MCF 10A (cell line): ENCODE measurements at regions of chr3 and their contacts with region 1.

Region 1: DNA sequence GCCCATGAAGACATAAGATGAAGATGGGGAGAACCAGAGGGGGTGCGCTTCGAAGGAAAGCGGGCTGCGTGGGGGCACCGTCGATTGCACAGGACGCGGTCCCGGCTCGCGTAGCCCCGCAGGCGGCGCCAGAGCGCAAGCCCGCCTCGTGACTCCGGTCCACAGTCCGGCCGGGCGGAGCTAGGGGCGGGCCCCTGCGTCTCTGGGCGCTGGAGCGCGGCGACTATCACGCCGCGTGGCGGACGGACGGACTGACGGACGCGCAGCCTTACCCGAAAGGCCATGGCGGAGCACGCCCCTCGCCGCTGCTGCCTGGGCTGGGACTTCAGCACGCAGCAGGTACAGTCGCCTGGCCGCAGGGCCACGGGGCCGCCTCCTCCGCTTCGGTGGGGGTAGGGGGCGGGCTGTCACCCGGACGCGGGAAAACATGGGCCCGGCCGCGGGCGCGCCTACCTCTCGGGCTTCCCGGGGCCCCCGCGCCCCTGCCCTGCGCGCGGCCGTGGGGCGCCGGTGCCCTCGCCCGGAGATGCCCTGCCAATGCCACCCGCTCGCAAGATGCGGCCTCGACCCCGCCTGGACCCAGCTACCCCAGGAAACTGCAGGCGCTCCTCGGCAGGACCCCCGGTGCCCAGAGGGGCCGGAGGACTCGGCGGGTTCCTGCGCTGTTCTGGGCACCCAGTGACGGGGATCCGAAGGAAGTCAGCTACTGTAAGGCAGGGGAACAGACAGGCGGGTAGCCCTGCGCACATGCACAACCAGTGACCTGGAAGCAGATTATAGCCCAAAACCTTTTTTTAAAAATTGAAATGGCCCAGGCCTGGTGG is at the start of gene XYLB:
- DNase-seq: peak; percentile 83
- H3K4me3 Mint-ChIP-seq: peak within 1 kb of the TSS; percentile 69
- H3K27ac Mint-ChIP-seq: no peak within 1 kb of the TSS
- H3K4me1 Mint-ChIP-seq: peaks cover 8% of the 10 kb centered on the region
- H3K27me3 Mint-ChIP-seq: no peaks in the 10 kb centered on the region
- CTCF ChIP-seq: peak; percentile 77
- total RNA-seq, gene XYLB: 4.4 and 6.6 TPM in 2 replicates

Region 2: DNA sequence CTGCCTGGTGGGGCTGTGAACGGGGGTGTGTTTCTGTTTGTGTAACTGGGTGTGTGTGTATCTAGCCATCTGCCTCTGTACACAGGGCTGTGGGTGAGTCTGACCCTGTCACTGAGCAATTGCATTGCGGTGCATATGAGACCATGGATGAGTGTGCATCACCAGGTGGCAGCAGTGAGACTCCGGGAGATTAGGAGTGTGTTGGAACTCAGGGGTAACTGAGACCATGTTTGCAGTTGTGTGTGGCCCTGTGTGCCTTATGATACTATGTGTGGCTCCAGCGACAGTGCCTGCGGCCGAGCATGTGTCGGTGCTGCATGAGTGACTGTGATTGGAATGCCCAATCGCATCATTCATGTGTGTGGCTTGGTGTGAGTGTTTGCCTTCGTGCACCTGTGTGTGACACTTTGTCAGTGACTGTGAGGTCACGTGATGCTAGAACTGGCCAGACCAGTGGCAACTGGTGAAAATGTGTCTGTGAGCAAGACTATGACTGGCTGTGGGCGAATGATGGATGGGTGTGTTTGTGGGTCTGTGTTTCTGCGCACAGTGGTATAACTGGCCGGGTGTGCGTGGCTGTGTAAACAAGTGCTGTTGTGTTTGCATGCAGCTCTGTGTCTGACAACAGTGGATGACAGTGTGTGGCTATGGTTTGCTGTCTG is 342.3 kb before region 1 on chr3:
- CTCF ChIA-PET with region 1: interaction called, 8 read pairs
- POLR2A ChIA-PET with region 1: no interaction called
- intact Hi-C with region 1: loop called (anchors 10 kb)
- DNase-seq: peak; percentile 81
- H3K4me3 Mint-ChIP-seq: no peak overlapping the region
- H3K27ac Mint-ChIP-seq: no peak overlapping the region
- H3K4me1 Mint-ChIP-seq: peaks cover 23% of the 10 kb centered on the region
- H3K27me3 Mint-ChIP-seq: no peaks in the 10 kb centered on the region
- CTCF ChIP-seq: peak; percentile 69

Region 3: GRCh38 chr3:38136777-38137614 is 209.8 kb before region 1 on chr3 and contains the start of gene ACAA1:
- CTCF ChIA-PET with region 1: no interaction called
- POLR2A ChIA-PET with region 1: interaction called, 4 read pairs
- intact Hi-C with region 1: loop called (anchors 5 kb)
- DNase-seq: peak; percentile 99
- H3K4me3 Mint-ChIP-seq: peak within 1 kb of the TSS; percentile 81
- H3K27ac Mint-ChIP-seq: peak within 1 kb of the TSS; percentile 71
- H3K4me1 Mint-ChIP-seq: peaks cover 51% of the 10 kb centered on the region
- H3K27me3 Mint-ChIP-seq: no peaks in the 10 kb centered on the region
- CTCF ChIP-seq: no peak
- total RNA-seq, gene ACAA1: 36.6 and 46.7 TPM in 2 replicates

Region 4: GRCh38 chr3:38334142-38335055 is 12.4 kb before region 1 on chr3:
- CTCF ChIA-PET with region 1: interaction called, 15 read pairs
- POLR2A ChIA-PET with region 1: no interaction called
- intact Hi-C with region 1: no loop called
- DNase-seq: no peak
- H3K4me3 Mint-ChIP-seq: no peak overlapping the region
- H3K27ac Mint-ChIP-seq: no peak overlapping the region
- H3K4me1 Mint-ChIP-seq: no peaks in the 10 kb centered on the region
- H3K27me3 Mint-ChIP-seq: no peaks in the 10 kb centered on the region
- CTCF ChIP-seq: no peak

Region 5: GRCh38 chr3:38454884-38455638 is 108.3 kb after region 1 on chr3:
- CTCF ChIA-PET with region 1: interaction called, 27 read pairs
- POLR2A ChIA-PET with region 1: interaction called, 6 read pairs
- intact Hi-C with region 1: loop called (anchors 2 kb)
- DNase-seq: peak; percentile 78
- H3K4me3 Mint-ChIP-seq: peak overlapping the region; percentile 89
- H3K27ac Mint-ChIP-seq: peak overlapping the region; percentile 88
- H3K4me1 Mint-ChIP-seq: peaks cover 13% of the 10 kb centered on the region
- H3K27me3 Mint-ChIP-seq: no peaks in the 10 kb centered on the region
- CTCF ChIP-seq: no peak

Region 6: GRCh38 chr3:38496131-38496910 is 149.5 kb after region 1 on chr3 and contains the start of gene EXOG:
- CTCF ChIA-PET with region 1: interaction called, 19 read pairs
- POLR2A ChIA-PET with region 1: interaction called, 4 read pairs
- intact Hi-C with region 1: no loop called
- DNase-seq: peak; percentile 91
- H3K4me3 Mint-ChIP-seq: peak within 1 kb of the TSS; percentile 78
- H3K27ac Mint-ChIP-seq: peak within 1 kb of the TSS; percentile 33
- H3K4me1 Mint-ChIP-seq: peaks cover 9% of the 10 kb centered on the region
- H3K27me3 Mint-ChIP-seq: no peaks in the 10 kb centered on the region
- CTCF ChIP-seq: peak; percentile 82
- total RNA-seq, gene EXOG: 17.5 and 21.9 TPM in 2 replicates